Caco-2 (cell line): ENCODE measurements at regions of chr1 and their contacts with region 1.

Region 1: DNA sequence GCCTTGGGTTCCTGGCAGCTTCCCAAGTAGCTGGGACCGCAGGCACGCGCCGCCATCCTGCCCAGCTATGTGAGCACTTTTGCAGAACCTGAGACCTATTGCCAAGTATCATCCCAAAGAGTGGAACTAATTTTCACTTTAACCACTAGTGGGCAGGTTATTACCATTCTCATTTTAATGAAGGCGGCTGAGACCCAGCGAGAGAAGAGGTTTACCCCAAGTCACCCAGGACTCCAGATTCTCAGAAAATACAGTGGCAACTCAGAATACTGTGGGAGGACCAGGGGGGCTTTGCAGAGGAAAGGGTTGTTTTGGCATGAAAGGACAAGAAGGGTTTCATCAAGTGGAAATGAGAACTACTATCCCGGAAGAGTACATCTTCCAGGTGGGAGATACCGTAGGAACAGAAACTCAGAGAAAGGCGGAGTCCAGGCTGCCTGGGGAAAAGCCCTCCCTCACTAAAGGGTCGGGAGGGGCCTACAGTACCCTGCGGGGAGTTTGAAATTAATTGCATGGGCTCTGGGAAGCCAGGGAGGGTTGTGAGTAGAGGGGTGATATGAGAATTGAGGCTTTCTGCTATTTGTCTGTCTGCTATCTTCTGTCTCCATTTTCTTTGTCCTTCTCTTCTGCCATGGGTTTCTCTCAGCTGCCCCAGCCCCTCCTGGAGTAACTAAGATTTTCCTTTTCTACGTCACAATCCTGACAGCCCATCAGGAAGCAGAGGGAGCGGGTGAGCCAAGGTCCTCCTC is 7.2 kb upstream of the SEMA4A start:
- DNase-seq: peak in 1 of 2 experiments; percentile 74
- H3K4me3 ChIP-seq: peak overlapping the region; percentile 22; the same call in 1 of the 2 replicates
- H3K4me3 Mint-ChIP-seq: peak overlapping the region; percentile 68
- H3K27ac Mint-ChIP-seq: peak overlapping the region; percentile 88
- H3K4me1 ChIP-seq: peaks cover 11% of the 10 kb centered on the region
- H3K4me1 Mint-ChIP-seq: peaks cover 20% of the 10 kb centered on the region
- H3K27me3 ChIP-seq: no peaks in the 10 kb centered on the region
- H3K27me3 Mint-ChIP-seq: no peaks in the 10 kb centered on the region
- CTCF ChIP-seq: peak; percentile 65 to 78

Region 2: GRCh38 chr1:155929057-155929456 is 217.1 kb before region 1 on chr1:
- CTCF ChIA-PET with region 1: no interaction called
- POLR2A ChIA-PET with region 1: no interaction called
- intact Hi-C with region 1: no loop called
- DNase-seq: no peak
- H3K4me3 ChIP-seq: no peak overlapping the region
- H3K4me3 Mint-ChIP-seq: no peak overlapping the region
- H3K27ac Mint-ChIP-seq: no peak overlapping the region
- H3K4me1 ChIP-seq: peaks cover 20% of the 10 kb centered on the region
- H3K4me1 Mint-ChIP-seq: peaks cover 16% of the 10 kb centered on the region
- H3K27me3 ChIP-seq: no peaks in the 10 kb centered on the region
- H3K27me3 Mint-ChIP-seq: no peaks in the 10 kb centered on the region
- CTCF ChIP-seq: no peak

Region 3: DNA sequence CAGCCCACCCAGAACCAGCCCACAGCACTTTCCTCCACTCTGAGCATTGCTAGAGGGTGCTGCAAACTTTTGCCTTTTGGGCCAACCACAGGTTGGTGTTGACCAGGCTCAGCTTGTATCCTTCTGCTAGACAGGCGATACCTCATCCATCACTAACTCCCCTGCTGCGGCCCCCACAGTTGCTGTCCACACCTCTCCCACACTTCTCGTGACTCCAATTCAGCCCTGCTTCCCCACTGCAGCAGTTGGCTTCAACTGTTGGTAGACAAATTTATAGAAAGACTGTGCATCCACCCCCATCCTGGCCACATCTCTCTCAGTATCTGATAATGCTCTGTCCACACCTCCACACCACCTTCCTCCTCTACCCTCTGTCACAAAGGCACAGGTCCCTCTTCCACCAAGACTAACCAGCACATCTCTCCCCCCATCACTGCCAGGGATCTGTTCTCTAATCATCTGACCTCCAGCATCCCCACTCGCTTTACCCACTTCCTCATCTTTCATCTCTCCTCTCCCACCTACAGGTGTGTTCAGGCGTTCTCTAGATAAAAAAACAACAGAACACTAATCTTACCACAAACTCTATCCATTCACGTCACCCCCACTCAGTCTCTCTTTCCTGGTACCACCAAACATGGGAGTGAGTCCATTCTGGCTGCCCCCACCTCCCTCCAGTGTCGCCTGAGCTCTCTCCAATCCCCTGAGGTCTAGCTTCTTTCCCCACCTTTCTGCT is 31.9 kb after region 1 on chr1:
- CTCF ChIA-PET with region 1: no interaction called
- POLR2A ChIA-PET with region 1: no interaction called
- intact Hi-C with region 1: loop called (anchors 1 kb)
- DNase-seq: no peak
- H3K4me3 ChIP-seq: no peak overlapping the region
- H3K4me3 Mint-ChIP-seq: no peak overlapping the region
- H3K27ac Mint-ChIP-seq: peak overlapping the region; percentile 38
- H3K4me1 ChIP-seq: peaks cover 50% of the 10 kb centered on the region
- H3K4me1 Mint-ChIP-seq: peaks cover 27% of the 10 kb centered on the region
- H3K27me3 ChIP-seq: no peaks in the 10 kb centered on the region
- H3K27me3 Mint-ChIP-seq: no peaks in the 10 kb centered on the region
- CTCF ChIP-seq: no peak

Region 4: GRCh38 chr1:156193488-156194299 is 47.5 kb after region 1 on chr1 and contains the start of gene SLC25A44:
- CTCF ChIA-PET with region 1: interaction called, 3 read pairs
- POLR2A ChIA-PET with region 1: no interaction called
- intact Hi-C with region 1: loop called (anchors 1 kb)
- DNase-seq: peak; percentile 97
- H3K4me3 ChIP-seq: peak within 1 kb of the TSS; percentile 85
- H3K4me3 Mint-ChIP-seq: peak within 1 kb of the TSS; percentile 92
- H3K27ac Mint-ChIP-seq: peak within 1 kb of the TSS; percentile 82
- H3K4me1 ChIP-seq: peaks cover 9% of the 10 kb centered on the region; the same call in 1 of the 2 replicates
- H3K4me1 Mint-ChIP-seq: peaks cover 16% of the 10 kb centered on the region
- H3K27me3 ChIP-seq: no peaks in the 10 kb centered on the region
- H3K27me3 Mint-ChIP-seq: no peaks in the 10 kb centered on the region
- CTCF ChIP-seq: peak; percentile 51 to 69
- total RNA-seq, gene SLC25A44: 29.3 and 31.1 TPM in 2 replicates

Region 5: DNA sequence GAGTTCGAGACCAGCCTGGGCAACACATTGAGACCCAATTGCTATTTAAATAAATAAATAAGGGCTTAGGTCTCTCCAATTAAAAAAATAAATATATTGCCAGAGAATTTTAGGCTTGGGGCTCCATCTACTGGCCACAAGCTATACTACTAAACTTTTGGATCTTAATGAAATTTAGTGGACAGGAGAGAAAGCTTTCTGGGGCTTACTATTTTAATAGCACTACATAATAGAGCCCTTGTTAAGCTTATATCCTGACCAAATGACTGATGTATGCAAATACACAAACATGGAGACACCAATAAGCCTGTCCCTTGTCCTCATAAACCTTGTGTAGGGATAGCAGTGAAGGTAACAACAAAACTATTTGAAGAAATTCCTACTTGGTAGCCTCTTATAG is 173.5 kb after region 1 on chr1:
- CTCF ChIA-PET with region 1: interaction called, 4 read pairs
- POLR2A ChIA-PET with region 1: no interaction called
- intact Hi-C with region 1: loop called (anchors 5 kb)
- DNase-seq: peak in 1 of 2 experiments; percentile 40
- H3K4me3 ChIP-seq: no peak overlapping the region
- H3K4me3 Mint-ChIP-seq: no peak overlapping the region
- H3K27ac Mint-ChIP-seq: no peak overlapping the region
- H3K4me1 ChIP-seq: no peaks in the 10 kb centered on the region
- H3K4me1 Mint-ChIP-seq: no peaks in the 10 kb centered on the region
- H3K27me3 ChIP-seq: no peaks in the 10 kb centered on the region
- H3K27me3 Mint-ChIP-seq: no peaks in the 10 kb centered on the region
- CTCF ChIP-seq: peak; percentile 57 to 60